ENCODE measurements at regions of chr12 and their contacts with region 1.

Region 1: GRCh38 chr12:14239350-14239934 is 126.0 kb upstream of the ATF7IP start:
- DNase-seq: no peak
- H3K4me3 ChIP-seq: no peak overlapping the region; the same call in 1 of the 2 replicates
- CTCF ChIP-seq: no peak

Region 2: DNA sequence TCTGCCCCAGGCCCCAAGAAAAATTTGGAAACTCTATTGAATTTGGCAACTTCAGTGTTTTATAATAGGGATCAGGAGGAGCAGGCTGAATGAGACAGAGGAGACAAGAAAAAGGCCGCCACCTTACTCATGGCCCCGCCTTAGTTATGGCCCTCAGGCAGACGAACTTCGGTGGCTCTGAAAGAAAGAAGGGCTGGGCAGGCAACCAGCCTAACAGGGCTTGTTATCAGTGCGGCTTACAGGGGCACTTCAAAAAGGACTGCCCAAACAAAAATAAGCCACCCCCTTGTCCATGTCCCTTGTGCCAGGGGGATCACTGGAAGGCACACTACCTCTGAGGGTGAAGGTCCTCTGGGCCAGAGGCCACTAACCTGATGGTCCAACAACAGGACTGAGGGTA is 20.3 kb before region 1 on chr12:
- CTCF ChIA-PET with region 1: interaction called, 11 read pairs
- POLR2A ChIA-PET with region 1: no interaction called
- DNase-seq: no peak
- H3K4me3 ChIP-seq: no peak overlapping the region
- CTCF ChIP-seq: no peak

Region 3: GRCh38 chr12:14365294-14366208 is 126.1 kb after region 1 on chr12 and contains the start of gene ATF7IP:
- CTCF ChIA-PET with region 1: interaction called, 17 read pairs
- POLR2A ChIA-PET with region 1: no interaction called
- DNase-seq: peak; percentile 89
- H3K4me3 ChIP-seq: peak within 1 kb of the TSS; percentile 79
- CTCF ChIP-seq: peak; percentile 25

Region 4: GRCh38 chr12:14427929-14428328 is 188.5 kb after region 1 on chr12:
- CTCF ChIA-PET with region 1: interaction called, 33 read pairs
- POLR2A ChIA-PET with region 1: no interaction called
- DNase-seq: no peak
- H3K4me3 ChIP-seq: no peak overlapping the region
- CTCF ChIP-seq: no peak

Region 5: DNA sequence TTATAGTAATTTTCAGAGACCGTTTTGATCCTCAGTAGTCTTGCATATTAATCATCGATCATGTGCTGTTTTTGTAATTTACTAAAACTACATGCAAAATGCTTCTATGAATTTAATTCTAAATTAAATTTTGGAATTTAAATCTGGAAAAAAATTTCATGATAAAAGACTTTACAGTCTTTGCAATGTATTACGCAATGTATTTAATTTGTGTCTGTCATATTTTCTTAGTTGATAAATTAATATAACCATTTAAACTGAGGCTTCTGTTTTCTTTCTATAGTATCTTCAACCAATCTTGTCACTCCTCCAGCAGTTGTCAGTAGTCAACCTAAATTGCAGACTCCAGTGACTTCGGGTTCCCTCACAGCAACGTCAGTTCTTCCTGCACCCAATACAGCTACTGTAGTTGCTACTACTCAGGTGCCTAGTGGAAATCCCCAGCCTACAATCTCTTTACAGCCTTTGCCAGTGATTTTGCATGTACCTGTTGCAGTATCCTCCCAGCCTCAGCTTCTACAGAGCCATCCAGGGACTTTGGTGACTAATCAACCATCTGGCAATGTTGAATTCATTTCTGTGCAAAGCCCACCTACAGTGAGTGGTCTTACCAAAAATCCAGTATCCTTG is 220.9 kb after region 1 on chr12:
- CTCF ChIA-PET with region 1: interaction called, 47 read pairs
- POLR2A ChIA-PET with region 1: no interaction called
- DNase-seq: no peak
- H3K4me3 ChIP-seq: no peak overlapping the region
- CTCF ChIP-seq: no peak

Region 6: DNA sequence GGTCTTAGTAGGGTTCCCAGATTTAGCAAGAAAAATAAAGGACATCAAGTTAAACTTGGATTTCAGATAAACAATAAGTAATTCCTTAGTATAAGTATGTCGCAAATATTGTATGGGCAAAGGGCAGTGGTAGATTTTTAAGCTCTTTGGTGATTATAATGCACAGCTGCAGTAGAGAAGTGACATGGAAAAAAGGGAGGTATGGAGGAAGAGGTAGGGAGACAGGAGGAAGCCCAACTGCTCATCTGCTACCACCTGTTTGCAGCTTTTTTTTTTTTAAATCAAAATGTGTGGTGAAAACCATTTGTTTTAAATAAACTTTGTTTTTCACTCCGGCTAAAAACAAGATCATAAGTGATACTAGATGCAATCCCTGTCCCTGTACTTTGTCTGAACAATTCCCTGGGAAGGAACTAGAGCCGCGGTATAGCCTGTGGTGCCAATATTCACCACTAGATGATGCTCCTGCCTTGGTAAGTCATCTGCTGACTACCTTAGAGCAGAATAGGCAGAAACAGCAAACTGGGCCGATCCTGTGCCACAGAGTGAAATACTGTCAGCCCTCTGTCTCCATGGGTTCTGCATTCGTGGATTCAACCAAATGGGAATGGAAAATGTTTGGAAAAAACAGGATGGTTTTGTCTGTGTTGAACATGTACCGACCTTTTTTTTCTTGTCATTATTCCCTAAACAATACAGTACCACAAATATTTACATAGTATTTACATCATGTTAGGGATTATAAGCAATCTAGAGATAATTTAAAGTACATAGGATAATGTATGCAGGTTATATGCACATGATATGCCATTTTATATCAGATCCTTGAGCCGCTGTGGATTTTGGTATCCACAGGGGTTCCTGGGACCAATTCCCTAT is 390.6 kb after region 1 on chr12:
- CTCF ChIA-PET with region 1: interaction called, 21 read pairs
- POLR2A ChIA-PET with region 1: no interaction called
- DNase-seq: no peak
- H3K4me3 ChIP-seq: no peak overlapping the region
- CTCF ChIP-seq: peak; percentile 86

Measured in AG04449 (cell line).